ENCODE measurements at regions of chr2 and their contacts with region 1.

Region 1: GRCh38 chr2:12797815-12798214 is 81.1 kb downstream of the TRIB2 start:
- DNase-seq: no peak
- ATAC-seq: no peak
- H3K4me3 ChIP-seq: no peak overlapping the region
- H3K27ac ChIP-seq: no peak overlapping the region
- H3K4me1 ChIP-seq: no peaks in the 10 kb centered on the region
- H3K27me3 ChIP-seq: no peaks in the 10 kb centered on the region
- CTCF ChIP-seq: no peak

Region 2: GRCh38 chr2:12737738-12738485 is 59.9 kb before region 1 on chr2:
- CTCF ChIA-PET with region 1: no interaction called
- POLR2A ChIA-PET with region 1: no interaction called
- in situ Hi-C with region 1: no loop called
- intact Hi-C with region 1: no loop called
- DNase-seq: no peak
- ATAC-seq: no peak
- H3K4me3 ChIP-seq: no peak overlapping the region
- H3K27ac ChIP-seq: no peak overlapping the region
- H3K4me1 ChIP-seq: no peaks in the 10 kb centered on the region
- H3K27me3 ChIP-seq: no peaks in the 10 kb centered on the region
- CTCF ChIP-seq: no peak

Region 3: GRCh38 chr2:12882393-12882792 is 84.6 kb after region 1 on chr2:
- CTCF ChIA-PET with region 1: no interaction called
- POLR2A ChIA-PET with region 1: interaction called, 12 read pairs
- in situ Hi-C with region 1: no loop called
- intact Hi-C with region 1: no loop called
- DNase-seq: no peak
- ATAC-seq: no peak
- H3K4me3 ChIP-seq: no peak overlapping the region
- H3K27ac ChIP-seq: no peak overlapping the region
- H3K4me1 ChIP-seq: no peaks in the 10 kb centered on the region
- H3K27me3 ChIP-seq: no peaks in the 10 kb centered on the region
- CTCF ChIP-seq: no peak

Measured in Panc1 (cell line).